ENCODE measurements at regions of chr11 and their contacts with region 1.

Region 1: GRCh38 chr11:69094111-69094914 is 45.6 kb downstream of the TPCN2 start:
- ATAC-seq: peak in 7 of 8 experiments; percentile 12 to 60 (median 39)
- H3K4me3 ChIP-seq: no peak overlapping the region
- H3K27ac ChIP-seq: no peak overlapping the region
- H3K4me1 ChIP-seq: no peaks in the 10 kb centered on the region

Region 2: GRCh38 chr11:69287968-69288882 is 193.9 kb after region 1 on chr11:
- in situ Hi-C with region 1: no loop called
- ATAC-seq: no peak
- H3K4me3 ChIP-seq: no peak overlapping the region
- H3K27ac ChIP-seq: no peak overlapping the region
- H3K4me1 ChIP-seq: peaks cover 8 to 9% of the 10 kb centered on the region in 2 donors

Region 3: GRCh38 chr11:69436973-69437875 is 342.9 kb after region 1 on chr11:
- in situ Hi-C with region 1: no loop called
- ATAC-seq: peak in 5 of 8 experiments; percentile 20 to 49 (median 29)
- H3K4me3 ChIP-seq: no peak overlapping the region
- H3K27ac ChIP-seq: no peak overlapping the region
- H3K4me1 ChIP-seq: peaks cover 0 to 5% of the 10 kb centered on the region in 2 donors

Region 4: DNA sequence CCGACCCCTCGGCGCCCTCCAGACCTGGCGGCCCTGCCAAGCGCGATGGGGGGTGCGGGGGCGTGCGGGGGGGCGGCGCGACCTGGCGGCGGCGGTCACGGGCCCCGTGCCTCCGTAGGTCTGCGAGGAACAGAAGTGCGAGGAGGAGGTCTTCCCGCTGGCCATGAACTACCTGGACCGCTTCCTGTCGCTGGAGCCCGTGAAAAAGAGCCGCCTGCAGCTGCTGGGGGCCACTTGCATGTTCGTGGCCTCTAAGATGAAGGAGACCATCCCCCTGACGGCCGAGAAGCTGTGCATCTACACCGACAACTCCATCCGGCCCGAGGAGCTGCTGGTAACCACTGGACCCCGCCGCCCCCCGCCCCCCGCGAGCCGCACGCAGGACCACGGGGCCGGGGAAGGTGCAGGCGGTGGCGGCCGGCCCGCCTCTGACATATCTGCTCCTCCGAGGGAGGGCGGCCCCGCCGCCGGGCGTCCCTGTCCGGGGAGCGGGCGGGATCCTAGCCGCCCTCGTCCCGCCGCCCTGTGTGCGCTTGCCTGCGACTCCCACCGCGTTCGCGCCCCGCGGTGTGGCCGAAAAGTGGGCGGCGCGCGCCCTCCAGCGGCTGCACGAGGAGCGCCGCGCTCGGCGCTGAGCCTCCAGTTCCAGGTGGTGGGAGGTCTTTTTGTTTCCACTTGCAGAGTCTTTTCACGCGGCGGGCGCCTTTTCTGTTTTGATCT is 548.8 kb after region 1 on chr11:
- in situ Hi-C with region 1: loop called in 1 of 9 experiments (anchors 10 kb)
- ATAC-seq: peak; percentile 4 to 70 (median 59)
- H3K4me3 ChIP-seq: peak overlapping the region; percentile 31 to 46 (median 41)
- H3K27ac ChIP-seq: no peak overlapping the region
- H3K4me1 ChIP-seq: peaks cover 35 to 50% of the 10 kb centered on the region in 2 donors